Heart right ventricle (tissue), 16 donors: ENCODE measurements at regions of chr11 and their contacts with region 1.

Region 1: DNA sequence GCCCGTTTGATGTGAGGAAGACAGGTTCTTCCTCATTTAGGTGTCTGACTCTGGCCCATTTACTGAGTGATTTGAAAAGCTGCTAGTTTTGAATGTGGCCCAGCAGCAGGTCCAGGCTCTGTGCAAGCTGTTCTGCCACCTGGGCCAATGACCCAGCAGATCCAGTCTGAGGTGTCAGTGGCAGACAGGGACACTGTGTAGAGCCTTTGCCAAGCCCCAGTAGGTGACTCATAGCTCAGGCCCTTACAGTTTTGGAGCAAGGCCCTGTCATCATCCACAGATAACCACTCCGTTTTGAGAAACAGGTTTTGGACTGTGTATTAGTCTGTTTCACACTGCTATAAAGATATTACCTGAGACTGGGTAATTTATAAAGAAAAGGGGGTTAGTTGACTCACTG is 23.9 kb downstream of the TSPAN32 start:
- DNase-seq: peak in 1 of 2 donors; percentile 62
- ATAC-seq: peak; percentile 91 to 99 (median 95)
- H3K4me3 ChIP-seq: no peak overlapping the region
- H3K27ac ChIP-seq: peak overlapping the region in 9 of 10 donors; percentile 16 to 77 (median 50)
- H3K4me1 ChIP-seq: peaks cover 0 to 20% (median 0%) of the 10 kb centered on the region in 9 donors
- H3K27me3 ChIP-seq: no peaks in the 10 kb centered on the region
- CTCF ChIP-seq: no peak

Region 2: GRCh38 chr11:2360081-2360642 is 34.4 kb after region 1 on chr11:
- intact Hi-C with region 1: loop called in 2 of 10 experiments (anchors 2 to 5 kb)
- DNase-seq: no peak
- ATAC-seq: no peak
- H3K4me3 ChIP-seq: no peak overlapping the region
- H3K27ac ChIP-seq: no peak overlapping the region
- H3K4me1 ChIP-seq: peaks cover 0 to 3% (median 0%) of the 10 kb centered on the region in 9 donors
- H3K27me3 ChIP-seq: no peaks in the 10 kb centered on the region
- CTCF ChIP-seq: no peak

Region 3: GRCh38 chr11:2365571-2366210 is 40.0 kb after region 1 on chr11:
- intact Hi-C with region 1: loop called in 3 of 10 experiments (anchors 2 to 5 kb)
- DNase-seq: no peak
- ATAC-seq: peak in 1 of 8 donors; percentile 3
- H3K4me3 ChIP-seq: no peak overlapping the region
- H3K27ac ChIP-seq: peak overlapping the region in 1 of 10 donors; percentile 71
- H3K4me1 ChIP-seq: peaks cover 0 to 30% (median 19%) of the 10 kb centered on the region in 9 donors
- H3K27me3 ChIP-seq: no peaks in the 10 kb centered on the region
- CTCF ChIP-seq: no peak

Region 4: DNA sequence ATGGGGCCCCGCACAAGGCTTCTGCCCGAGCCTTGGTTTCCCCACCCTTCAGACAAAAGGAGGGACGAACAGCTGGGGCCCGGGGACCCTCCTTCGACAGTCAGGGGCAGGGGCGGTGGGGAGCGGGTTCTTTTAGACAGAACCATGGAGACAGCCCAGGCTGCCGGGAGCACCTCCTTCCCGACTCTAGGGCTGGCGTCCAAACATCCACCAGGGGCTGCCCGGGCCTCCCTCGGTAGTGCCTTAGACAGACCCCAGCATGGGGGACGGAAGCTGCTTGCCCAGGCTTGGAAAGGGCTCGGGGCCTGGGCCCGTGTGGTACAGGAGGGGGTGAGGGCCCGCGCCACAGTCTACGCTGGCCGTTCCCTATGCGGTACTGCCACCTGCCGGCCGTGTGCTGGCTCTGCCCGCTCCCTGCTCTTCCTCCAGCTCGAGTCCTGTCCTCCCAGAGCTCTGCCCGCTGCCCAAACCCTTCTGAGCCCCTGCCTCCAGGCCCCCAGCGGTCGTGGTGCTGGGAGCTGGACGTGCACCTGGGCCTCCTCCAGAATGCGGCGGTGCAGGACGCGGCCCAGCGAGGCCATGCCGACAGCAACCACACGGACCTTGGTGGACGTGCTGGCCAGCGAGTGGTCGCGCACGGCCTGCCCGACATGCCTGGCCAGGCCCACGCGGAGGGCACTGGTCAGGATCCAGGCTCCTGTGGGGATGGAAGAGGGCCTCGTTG is 94.9 kb after region 1 on chr11:
- intact Hi-C with region 1: no loop called
- DNase-seq: peak; percentile 65 to 83
- ATAC-seq: peak; percentile 89 to 97 (median 94)
- H3K4me3 ChIP-seq: peak overlapping the region in 4 of 10 donors; percentile 3 to 27 (median 12)
- H3K27ac ChIP-seq: no peak overlapping the region
- H3K4me1 ChIP-seq: peaks cover 0 to 15% (median 9%) of the 10 kb centered on the region in 9 donors
- H3K27me3 ChIP-seq: peaks cover 0 to 18% (median 6%) of the 10 kb centered on the region in 7 donors
- CTCF ChIP-seq: peak; percentile 83 to 97 (median 95)